Activated CD4-positive, alpha-beta T cell treated with anti-CD3 and anti-CD28 coated beads, Interleukin-2, amount 10 ng/mL, durations not matched to agents 24 days and 14 days (primary cell): ENCODE measurements at regions of chr10 and their contacts with region 1.

Region 1: DNA sequence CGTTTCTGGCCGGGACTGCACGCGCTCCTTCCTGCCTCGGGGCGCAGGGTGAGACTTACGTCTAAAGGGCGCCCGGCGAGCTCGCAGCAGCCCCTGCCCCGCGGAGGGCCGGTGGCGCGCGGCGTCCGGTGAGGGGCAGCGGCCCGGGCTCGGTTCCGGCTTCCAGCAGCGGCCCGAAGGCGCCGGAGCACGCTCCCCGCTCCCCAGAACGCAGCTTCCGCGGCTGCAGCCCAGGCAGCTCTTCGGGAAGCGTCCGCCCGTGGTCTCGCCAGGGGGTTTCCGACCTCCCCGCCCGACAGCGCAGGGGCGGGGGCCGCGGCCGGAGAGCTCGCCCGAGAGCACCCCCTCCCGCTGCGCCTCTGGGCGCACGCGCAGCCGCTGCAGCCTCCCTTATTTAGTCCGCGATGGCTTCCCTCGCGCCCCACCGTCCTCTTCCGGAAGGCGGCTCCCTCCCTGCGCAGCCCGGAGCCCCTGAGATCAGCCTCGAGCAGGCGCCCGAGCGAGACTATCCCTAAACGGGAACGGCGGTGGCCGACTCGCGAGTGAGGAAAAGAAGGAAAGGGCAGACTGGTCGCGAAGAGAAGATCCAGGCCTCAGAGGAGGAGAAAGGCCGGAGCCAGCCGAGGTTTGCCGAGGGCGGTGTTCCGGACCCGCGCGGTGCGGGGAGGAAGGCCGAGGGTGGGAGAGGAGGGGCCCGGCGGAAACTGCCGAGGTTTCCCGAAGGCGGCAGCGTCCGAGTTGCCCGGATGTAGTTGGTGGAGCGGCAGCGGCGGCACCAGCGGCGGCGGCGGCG is at the start of gene WAC:
- DNase-seq: peak; percentile 99
- H3K4me3 Mint-ChIP-seq: peak within 1 kb of the TSS; percentile 98
- H3K27ac Mint-ChIP-seq: peak within 1 kb of the TSS; percentile 100
- H3K4me1 Mint-ChIP-seq: peaks cover 45% of the 10 kb centered on the region
- H3K27me3 Mint-ChIP-seq: peaks cover 1% of the 10 kb centered on the region
- total RNA-seq, gene WAC: 125 and 130 TPM in 2 replicates

Region 2: GRCh38 chr10:27241652-27242472 is 1290.7 kb before region 1 on chr10:
- intact Hi-C with region 1: loop called (anchors 5 kb)
- DNase-seq: peak; percentile 97
- H3K4me3 Mint-ChIP-seq: peak overlapping the region; percentile 96
- H3K27ac Mint-ChIP-seq: peak overlapping the region; percentile 99
- H3K4me1 Mint-ChIP-seq: peaks cover 31% of the 10 kb centered on the region
- H3K27me3 Mint-ChIP-seq: no peaks in the 10 kb centered on the region

Region 3: GRCh38 chr10:27742195-27743011 is 790.2 kb before region 1 on chr10:
- intact Hi-C with region 1: loop called (anchors 2 kb)
- DNase-seq: peak; percentile 94
- H3K4me3 Mint-ChIP-seq: peak overlapping the region; percentile 69
- H3K27ac Mint-ChIP-seq: peak overlapping the region; percentile 29
- H3K4me1 Mint-ChIP-seq: peaks cover 20% of the 10 kb centered on the region
- H3K27me3 Mint-ChIP-seq: peaks cover 67% of the 10 kb centered on the region

Region 4: GRCh38 chr10:28334296-28334695 is 198.3 kb before region 1 on chr10:
- intact Hi-C with region 1: loop called (anchors 2 kb)
- DNase-seq: peak; percentile 92
- H3K4me3 Mint-ChIP-seq: peak overlapping the region; percentile 91
- H3K27ac Mint-ChIP-seq: peak overlapping the region; percentile 100
- H3K4me1 Mint-ChIP-seq: peaks cover 46% of the 10 kb centered on the region
- H3K27me3 Mint-ChIP-seq: peaks cover 9% of the 10 kb centered on the region

Region 5: DNA sequence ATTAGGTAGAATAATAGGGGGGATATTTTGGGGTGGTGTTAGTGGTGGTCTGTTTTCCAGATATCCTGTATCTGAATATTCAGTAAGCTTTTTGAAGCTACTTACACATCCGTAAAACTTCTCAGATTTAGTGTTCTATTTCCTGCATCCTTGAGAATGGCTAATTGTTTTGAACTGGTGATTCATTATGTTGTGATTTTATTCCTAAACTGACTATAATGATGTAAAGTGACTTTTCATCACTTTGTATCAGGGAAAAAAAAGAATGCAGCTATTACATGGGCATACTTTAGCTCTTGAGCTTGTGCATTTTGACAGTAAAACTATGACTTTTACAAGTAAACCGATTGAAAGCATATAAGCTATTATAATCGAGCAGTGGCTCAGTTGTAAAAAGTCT is 18.5 kb after region 1 on chr10:
- intact Hi-C with region 1: loop called (anchors 2 kb)
- DNase-seq: no peak
- H3K4me3 Mint-ChIP-seq: no peak overlapping the region
- H3K27ac Mint-ChIP-seq: peak overlapping the region; percentile 41
- H3K4me1 Mint-ChIP-seq: peaks cover 56% of the 10 kb centered on the region
- H3K27me3 Mint-ChIP-seq: no peaks in the 10 kb centered on the region

Region 6: GRCh38 chr10:28592930-28593329 is 60.4 kb after region 1 on chr10:
- intact Hi-C with region 1: loop called (anchors 5 kb)
- DNase-seq: no peak
- H3K4me3 Mint-ChIP-seq: peak overlapping the region; percentile 49
- H3K27ac Mint-ChIP-seq: peak overlapping the region; percentile 79
- H3K4me1 Mint-ChIP-seq: peaks cover 34% of the 10 kb centered on the region
- H3K27me3 Mint-ChIP-seq: no peaks in the 10 kb centered on the region